CD4-positive, alpha-beta T cell (primary cell): ENCODE measurements at regions of chr16 and their contacts with region 1.

Region 1: DNA sequence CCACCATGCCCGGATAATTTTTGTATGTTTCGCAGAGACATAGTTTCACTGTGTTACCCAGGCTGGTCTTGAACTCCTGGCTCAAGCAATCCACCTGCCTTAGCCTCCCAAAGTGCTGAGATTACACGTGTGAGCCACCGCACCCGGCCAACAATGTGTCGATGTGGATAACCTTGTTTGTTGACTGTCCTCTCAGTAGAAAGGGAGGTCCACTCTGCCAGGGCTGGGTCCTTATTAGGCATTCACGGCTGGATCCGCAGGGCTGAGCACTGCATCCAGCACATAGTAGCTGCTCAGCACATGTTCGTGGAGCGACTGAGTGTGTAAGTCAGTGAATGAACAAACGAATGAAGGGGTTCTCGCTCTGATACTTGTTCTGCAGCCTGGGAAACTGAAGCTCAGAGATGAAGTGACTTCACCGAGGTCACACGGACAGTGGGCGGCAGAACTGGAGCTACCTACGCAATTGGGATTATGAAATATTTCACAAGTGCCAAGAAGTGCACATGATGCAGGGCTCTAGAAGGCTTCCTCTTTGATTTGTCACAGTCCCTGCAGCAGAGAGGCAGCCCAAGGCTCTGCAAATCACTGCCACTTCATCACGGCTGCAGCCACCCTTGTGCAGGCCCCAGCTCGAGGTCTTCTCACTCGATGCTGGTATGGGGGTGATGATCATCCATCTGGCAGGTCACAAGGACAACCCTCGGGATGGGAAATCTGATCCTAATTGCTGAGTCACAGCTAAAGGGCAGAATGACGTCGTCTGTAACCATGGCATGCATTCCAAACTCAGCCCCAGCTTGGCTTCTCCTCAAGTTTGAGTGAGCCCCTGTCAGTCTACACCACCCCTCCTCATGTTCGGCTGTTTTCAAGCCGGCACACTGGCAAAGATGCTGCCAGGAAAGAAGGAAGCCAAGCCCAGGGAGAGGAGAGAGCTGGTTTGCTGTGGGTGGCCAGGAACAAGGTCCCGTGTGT is 28.0 kb upstream of the SNN start:
- DNase-seq: peak in 3 of 14 experiments; percentile 43 to 78 (median 68)
- ATAC-seq: no peak
- H3K4me3 ChIP-seq: no peak overlapping the region
- H3K4me3 Mint-ChIP-seq: no peak overlapping the region
- H3K27ac ChIP-seq: no peak overlapping the region
- H3K27ac Mint-ChIP-seq: no peak overlapping the region
- H3K4me1 ChIP-seq: peaks cover 22% of the 10 kb centered on the region
- H3K4me1 Mint-ChIP-seq: peaks cover 14% of the 10 kb centered on the region
- H3K27me3 ChIP-seq: peaks cover 0 to 2% of the 10 kb centered on the region in 2 experiments
- H3K27me3 Mint-ChIP-seq: no peaks in the 10 kb centered on the region
- CTCF ChIP-seq: no peak

Region 2: GRCh38 chr16:10453159-10453510 is 1187.1 kb before region 1 on chr16:
- CTCF ChIA-PET with region 1: no interaction called
- POLR2A ChIA-PET with region 1: no interaction called
- intact Hi-C with region 1: no loop called
- DNase-seq: no peak
- ATAC-seq: no peak
- H3K4me3 ChIP-seq: no peak overlapping the region
- H3K4me3 Mint-ChIP-seq: no peak overlapping the region
- H3K27ac ChIP-seq: no peak overlapping the region
- H3K27ac Mint-ChIP-seq: no peak overlapping the region
- H3K4me1 ChIP-seq: peaks cover 4% of the 10 kb centered on the region
- H3K4me1 Mint-ChIP-seq: peaks cover 16% of the 10 kb centered on the region
- H3K27me3 ChIP-seq: no peaks in the 10 kb centered on the region
- H3K27me3 Mint-ChIP-seq: no peaks in the 10 kb centered on the region
- CTCF ChIP-seq: no peak

Region 3: GRCh38 chr16:10918294-10919002 is 721.8 kb before region 1 on chr16:
- CTCF ChIA-PET with region 1: no interaction called
- POLR2A ChIA-PET with region 1: no interaction called
- intact Hi-C with region 1: no loop called
- DNase-seq: peak; percentile 55 to 87 (median 71)
- ATAC-seq: peak; percentile 56
- H3K4me3 ChIP-seq: no peak overlapping the region
- H3K4me3 Mint-ChIP-seq: no peak overlapping the region
- H3K27ac ChIP-seq: no peak overlapping the region
- H3K27ac Mint-ChIP-seq: no peak overlapping the region
- H3K4me1 ChIP-seq: peaks cover 7% of the 10 kb centered on the region
- H3K4me1 Mint-ChIP-seq: peaks cover 4% of the 10 kb centered on the region
- H3K27me3 ChIP-seq: no peaks in the 10 kb centered on the region
- H3K27me3 Mint-ChIP-seq: no peaks in the 10 kb centered on the region
- CTCF ChIP-seq: peak; percentile 83

Region 4: GRCh38 chr16:11396241-11397048 is 243.8 kb before region 1 on chr16:
- CTCF ChIA-PET with region 1: no interaction called
- POLR2A ChIA-PET with region 1: no interaction called
- intact Hi-C with region 1: loop called (anchors 2 to 10 kb)
- DNase-seq: peak; percentile 38 to 78 (median 59)
- ATAC-seq: peak; percentile 74
- H3K4me3 ChIP-seq: no peak overlapping the region
- H3K4me3 Mint-ChIP-seq: no peak overlapping the region
- H3K27ac ChIP-seq: no peak overlapping the region
- H3K27ac Mint-ChIP-seq: no peak overlapping the region
- H3K4me1 ChIP-seq: peaks cover 6% of the 10 kb centered on the region
- H3K4me1 Mint-ChIP-seq: no peaks in the 10 kb centered on the region
- H3K27me3 ChIP-seq: no peaks in the 10 kb centered on the region
- H3K27me3 Mint-ChIP-seq: no peaks in the 10 kb centered on the region
- CTCF ChIP-seq: peak; percentile 99

Region 5: GRCh38 chr16:11530171-11530940 is 109.9 kb before region 1 on chr16:
- CTCF ChIA-PET with region 1: interaction called, 35 read pairs
- POLR2A ChIA-PET with region 1: interaction called, 5 read pairs
- intact Hi-C with region 1: loop called (anchors 1 kb)
- DNase-seq: no peak
- ATAC-seq: no peak
- H3K4me3 ChIP-seq: no peak overlapping the region
- H3K4me3 Mint-ChIP-seq: no peak overlapping the region
- H3K27ac ChIP-seq: no peak overlapping the region
- H3K27ac Mint-ChIP-seq: no peak overlapping the region
- H3K4me1 ChIP-seq: peaks cover 3% of the 10 kb centered on the region
- H3K4me1 Mint-ChIP-seq: peaks cover 6% of the 10 kb centered on the region
- H3K27me3 ChIP-seq: peaks cover 0 to 3% of the 10 kb centered on the region in 2 experiments
- H3K27me3 Mint-ChIP-seq: no peaks in the 10 kb centered on the region
- CTCF ChIP-seq: no peak

Region 6: DNA sequence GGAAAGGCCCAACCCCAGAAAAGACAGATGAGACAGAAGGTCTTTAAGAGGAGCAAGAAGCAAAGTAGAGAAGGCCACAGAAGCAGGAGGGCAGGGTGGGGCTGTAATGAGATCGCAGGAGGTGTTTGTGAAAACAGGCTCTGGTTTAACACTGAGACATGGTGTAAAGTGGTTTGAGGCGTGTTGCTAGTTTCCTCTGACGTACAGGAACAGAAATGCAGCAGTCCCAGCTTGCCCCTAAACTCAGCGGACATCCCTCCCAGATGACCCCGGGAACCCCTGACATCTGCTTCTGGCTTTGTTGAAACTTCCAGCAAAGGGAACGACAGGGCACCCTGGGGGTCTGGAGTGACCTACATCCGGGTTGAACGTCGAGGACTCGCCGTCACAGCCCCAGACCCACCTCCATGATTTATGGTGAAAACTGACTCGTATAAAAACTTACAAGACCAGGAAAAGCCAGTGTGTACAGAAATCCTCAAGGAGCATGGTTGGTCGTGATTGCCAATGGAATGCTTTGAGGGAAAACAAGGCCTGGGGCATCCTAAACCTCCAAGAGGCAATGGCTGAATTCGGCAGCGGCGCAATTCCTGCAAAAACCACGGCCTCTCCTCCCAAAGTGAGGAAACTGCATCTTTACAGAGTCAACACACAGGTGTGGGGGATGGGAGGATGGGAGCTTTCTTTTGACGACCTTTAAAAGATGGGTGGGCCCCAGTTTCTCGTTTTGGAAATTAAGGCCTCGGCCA is 79.3 kb before region 1 on chr16:
- CTCF ChIA-PET with region 1: no interaction called
- POLR2A ChIA-PET with region 1: interaction called, 3 read pairs
- intact Hi-C with region 1: loop called in 1 of 2 experiments (anchors 5 kb)
- DNase-seq: peak; percentile 58 to 93 (median 67)
- ATAC-seq: peak; percentile 86
- H3K4me3 ChIP-seq: peak overlapping the region; percentile 53
- H3K4me3 Mint-ChIP-seq: peak overlapping the region; percentile 49
- H3K27ac ChIP-seq: peak overlapping the region; percentile 86 to 87
- H3K27ac Mint-ChIP-seq: peak overlapping the region; percentile 94
- H3K4me1 ChIP-seq: peaks cover 90% of the 10 kb centered on the region
- H3K4me1 Mint-ChIP-seq: peaks cover 83% of the 10 kb centered on the region
- H3K27me3 ChIP-seq: no peaks in the 10 kb centered on the region
- H3K27me3 Mint-ChIP-seq: no peaks in the 10 kb centered on the region
- CTCF ChIP-seq: no peak

Region 7: GRCh38 chr16:11597239-11598101 is 42.7 kb before region 1 on chr16:
- CTCF ChIA-PET with region 1: interaction called, 3 read pairs
- POLR2A ChIA-PET with region 1: interaction called, 3 read pairs
- intact Hi-C with region 1: loop called in 1 of 2 experiments (anchors 5 kb)
- DNase-seq: peak in 3 of 14 experiments; percentile 52 to 68 (median 57)
- ATAC-seq: peak; percentile 79
- H3K4me3 ChIP-seq: no peak overlapping the region
- H3K4me3 Mint-ChIP-seq: no peak overlapping the region
- H3K27ac ChIP-seq: peak overlapping the region in 1 of 2 donors; percentile 4
- H3K27ac Mint-ChIP-seq: peak overlapping the region; percentile 35
- H3K4me1 ChIP-seq: peaks cover 20% of the 10 kb centered on the region
- H3K4me1 Mint-ChIP-seq: peaks cover 29% of the 10 kb centered on the region
- H3K27me3 ChIP-seq: no peaks in the 10 kb centered on the region
- H3K27me3 Mint-ChIP-seq: no peaks in the 10 kb centered on the region
- CTCF ChIP-seq: no peak

Region 8: DNA sequence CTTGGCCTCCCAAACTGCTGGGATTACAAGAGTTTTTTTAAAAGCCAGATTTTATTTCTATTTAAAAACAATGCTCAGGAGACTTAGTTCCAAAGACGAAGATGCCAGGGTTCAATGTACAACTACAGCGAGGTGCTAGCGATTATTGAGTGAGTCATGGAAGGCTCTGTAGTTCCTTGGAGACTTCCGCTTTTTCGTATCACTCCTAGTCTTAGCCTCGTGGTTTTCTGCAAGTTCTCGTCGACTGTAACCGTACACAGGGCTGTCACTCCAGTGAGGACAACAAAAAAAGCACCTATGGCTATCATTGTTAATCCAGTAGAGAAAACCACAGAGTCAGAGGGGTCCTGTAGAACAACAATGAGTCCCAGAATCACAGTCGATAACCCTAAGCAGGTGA is 179.6 kb after region 1 on chr16:
- CTCF ChIA-PET with region 1: no interaction called
- POLR2A ChIA-PET with region 1: no interaction called
- intact Hi-C with region 1: loop called in 1 of 2 experiments (anchors 10 kb)
- DNase-seq: peak in 2 of 14 experiments; percentile 19 to 37
- ATAC-seq: no peak
- H3K4me3 ChIP-seq: no peak overlapping the region
- H3K4me3 Mint-ChIP-seq: no peak overlapping the region
- H3K27ac ChIP-seq: no peak overlapping the region
- H3K27ac Mint-ChIP-seq: no peak overlapping the region
- H3K4me1 ChIP-seq: peaks cover 2% of the 10 kb centered on the region
- H3K4me1 Mint-ChIP-seq: no peaks in the 10 kb centered on the region
- H3K27me3 ChIP-seq: no peaks in the 10 kb centered on the region
- H3K27me3 Mint-ChIP-seq: no peaks in the 10 kb centered on the region
- CTCF ChIP-seq: no peak